KBM-7 (cell line): ENCODE measurements at regions of chr20 and their contacts with region 1.

Region 1: DNA sequence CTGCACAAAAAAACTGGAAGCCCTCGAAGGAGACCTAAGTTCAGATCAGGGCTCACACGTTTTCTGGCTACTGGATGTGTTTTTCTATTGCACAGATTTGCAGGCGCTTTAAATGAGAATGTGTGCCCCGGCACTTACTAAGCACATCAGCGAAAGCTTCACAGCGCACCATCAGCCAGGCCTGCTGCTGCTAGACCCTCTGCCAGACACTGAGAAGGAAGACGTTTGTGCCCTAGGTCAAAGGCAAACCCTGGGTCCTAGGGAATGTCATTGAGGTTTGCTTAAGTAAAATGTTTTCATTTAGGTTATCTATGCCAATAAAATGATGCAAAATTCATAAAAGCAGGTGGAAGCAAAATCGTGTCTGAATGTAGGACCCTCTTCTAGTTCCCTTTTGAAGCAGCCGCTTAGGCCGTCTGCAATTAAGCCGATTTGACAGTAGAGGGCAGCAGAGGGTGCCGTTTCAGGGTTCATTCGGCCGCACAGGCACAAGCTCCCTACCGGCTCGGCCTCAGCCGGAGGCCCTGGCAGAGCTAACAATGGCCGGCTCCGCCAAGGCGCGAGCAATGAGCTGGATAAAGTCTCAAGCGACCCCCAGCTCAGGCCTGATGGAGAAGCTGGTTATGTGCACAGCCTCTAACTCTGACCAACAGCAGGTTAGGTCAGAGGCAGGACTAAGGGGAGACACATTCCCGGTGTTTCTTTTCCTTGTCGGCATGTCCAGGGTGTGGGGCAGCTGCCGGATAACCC is 107.2 kb upstream of the FOXA2 start:
- DNase-seq: peak; percentile 80

Region 2: GRCh38 chr20:22333885-22334545 is 357.5 kb before region 1 on chr20:
- in situ Hi-C with region 1: loop called (anchors 25 kb)
- DNase-seq: peak; percentile 63